Activated CD4-positive, alpha-beta T cell treated with anti-CD3 and anti-CD28 coated beads for 36 hours (primary cell): ENCODE measurements at regions of chr6 and their contacts with region 1.

Region 1: DNA sequence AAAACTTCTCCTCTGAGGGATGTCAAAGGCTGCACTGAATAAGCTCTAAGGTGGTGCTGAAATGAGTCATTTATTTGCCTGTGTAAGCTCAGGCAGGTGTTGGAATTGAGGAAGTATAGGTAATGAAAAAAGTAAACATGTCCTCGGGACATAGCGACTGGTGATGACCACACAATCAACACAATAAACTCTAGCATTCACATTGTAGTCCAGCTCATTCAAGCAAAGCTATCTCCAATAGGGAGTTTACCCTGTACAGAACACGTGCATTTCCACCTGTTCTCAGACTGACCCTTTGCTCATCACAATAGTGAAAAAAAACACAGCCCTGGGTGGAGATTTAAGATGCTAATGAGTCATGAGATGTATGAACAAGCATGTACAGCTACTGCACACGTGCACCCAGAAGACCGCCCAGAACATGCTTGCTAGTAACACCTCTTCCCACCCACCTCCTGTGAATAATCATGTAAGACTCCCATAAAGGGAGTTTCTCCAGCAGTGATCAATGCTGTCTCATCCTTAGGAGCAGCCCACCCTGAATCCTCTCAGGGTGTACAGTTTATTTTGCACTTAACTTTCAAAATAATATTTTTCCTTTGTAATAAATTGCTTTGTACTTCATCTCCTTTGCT is 33.0 kb upstream of the POU5F1 start:
- DNase-seq: peak; percentile 78
- ATAC-seq: peak; percentile 77
- H3K4me3 Mint-ChIP-seq: peak overlapping the region; percentile 74
- H3K27ac Mint-ChIP-seq: peak overlapping the region; percentile 94
- H3K4me1 Mint-ChIP-seq: peaks cover 63% of the 10 kb centered on the region
- H3K27me3 Mint-ChIP-seq: no peaks in the 10 kb centered on the region

Region 2: DNA sequence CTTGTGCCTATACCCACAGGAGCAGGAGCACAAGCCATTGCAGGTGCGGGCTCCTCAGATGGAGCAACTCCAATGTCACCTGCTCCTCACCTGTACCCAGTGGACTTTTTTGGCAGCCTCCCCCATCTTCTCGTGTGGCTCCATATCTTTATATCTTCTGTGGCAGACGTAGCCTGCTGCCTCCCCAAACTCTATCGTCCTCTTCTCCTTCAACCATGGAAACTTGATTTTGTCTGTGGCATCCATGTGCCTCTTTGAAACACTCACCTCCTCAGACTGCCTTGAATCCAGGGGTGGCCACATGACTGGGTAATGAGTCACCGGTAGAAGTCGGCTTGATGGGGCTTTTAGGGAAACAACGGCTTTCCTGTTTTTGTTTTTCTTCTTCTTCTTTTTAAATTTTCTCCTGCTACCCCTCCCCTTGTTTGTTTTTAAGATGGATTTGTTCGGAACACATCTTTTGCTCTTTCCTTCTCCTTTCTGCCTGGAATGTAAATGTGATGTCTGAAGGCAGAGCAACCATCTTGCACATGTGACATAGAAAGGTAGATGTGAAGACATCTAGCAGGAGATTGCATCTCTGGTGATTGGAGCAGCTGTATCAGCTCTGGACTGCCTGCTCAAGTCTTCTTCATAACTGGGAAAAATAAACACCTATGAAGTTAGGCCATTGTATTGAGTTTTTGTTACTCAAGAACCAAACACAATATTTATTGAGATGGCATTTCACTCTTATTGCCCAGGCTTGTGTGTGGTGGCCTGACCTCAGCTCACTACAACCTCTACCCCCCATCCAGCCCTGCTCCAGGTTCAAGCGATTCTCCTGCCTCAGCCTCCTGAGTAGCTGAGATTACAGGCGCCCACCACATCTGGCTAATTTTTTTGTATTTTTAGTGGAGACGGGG is 389.1 kb before region 1 on chr6:
- CTCF ChIA-PET with region 1: no interaction called
- POLR2A ChIA-PET with region 1: no interaction called
- intact Hi-C with region 1: loop called in 1 of 2 experiments (anchors 5 kb)
- DNase-seq: peak; percentile 79
- ATAC-seq: peak; percentile 40
- H3K4me3 Mint-ChIP-seq: peak overlapping the region; percentile 38
- H3K27ac Mint-ChIP-seq: peak overlapping the region; percentile 96
- H3K4me1 Mint-ChIP-seq: peaks cover 91% of the 10 kb centered on the region
- H3K27me3 Mint-ChIP-seq: no peaks in the 10 kb centered on the region

Region 3: DNA sequence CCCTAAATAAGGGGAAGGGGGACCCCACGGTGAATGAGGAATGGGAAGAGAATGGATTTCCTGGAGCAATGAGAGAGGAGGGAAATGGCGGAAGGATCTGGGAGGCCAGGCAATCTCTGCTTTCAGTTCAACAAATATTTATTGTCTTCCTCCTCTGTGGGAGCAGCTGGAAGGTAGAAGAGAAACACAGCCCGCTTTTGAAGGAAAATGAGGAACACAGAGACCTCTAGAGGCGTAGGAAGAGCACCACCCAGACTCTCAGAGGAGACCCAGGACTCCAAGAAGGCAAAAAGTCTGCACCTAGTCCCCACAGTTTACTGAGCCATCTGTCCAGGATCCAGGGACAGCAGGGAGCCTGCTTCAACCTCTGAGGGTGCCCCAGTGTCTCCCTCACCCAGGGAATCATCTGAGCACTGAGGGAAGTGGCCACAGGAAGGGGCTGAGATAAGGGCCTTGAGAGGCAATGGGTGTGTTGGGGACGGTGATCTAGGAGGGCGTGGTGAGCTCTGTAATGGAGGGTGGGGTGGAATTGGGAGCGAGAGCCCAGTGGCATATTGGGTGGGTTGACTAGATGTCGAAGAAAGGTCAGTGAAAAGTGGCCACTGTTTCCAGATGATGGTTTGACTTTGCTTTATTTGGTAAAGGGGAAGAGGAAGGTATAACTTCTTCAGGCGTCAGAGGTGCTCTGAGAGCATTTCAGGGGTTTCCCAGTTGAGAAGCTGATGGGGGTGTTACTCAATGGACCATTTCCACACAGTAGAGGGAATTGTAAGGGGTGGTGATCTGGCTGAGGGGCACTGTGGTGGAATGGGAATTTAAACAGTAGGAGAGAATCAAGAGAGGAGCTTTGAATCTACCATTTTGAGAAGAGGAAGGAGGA is 88.3 kb before region 1 on chr6:
- CTCF ChIA-PET with region 1: no interaction called
- POLR2A ChIA-PET with region 1: no interaction called
- intact Hi-C with region 1: no loop called
- DNase-seq: no peak
- ATAC-seq: no peak
- H3K4me3 Mint-ChIP-seq: no peak overlapping the region
- H3K27ac Mint-ChIP-seq: no peak overlapping the region
- H3K4me1 Mint-ChIP-seq: no peaks in the 10 kb centered on the region
- H3K27me3 Mint-ChIP-seq: peaks cover 2% of the 10 kb centered on the region

Region 4: GRCh38 chr6:31128093-31128676 is 75.3 kb before region 1 on chr6:
- CTCF ChIA-PET with region 1: no interaction called
- POLR2A ChIA-PET with region 1: no interaction called
- intact Hi-C with region 1: no loop called
- DNase-seq: peak; percentile 85
- ATAC-seq: peak; percentile 88
- H3K4me3 Mint-ChIP-seq: no peak overlapping the region
- H3K27ac Mint-ChIP-seq: no peak overlapping the region
- H3K4me1 Mint-ChIP-seq: peaks cover 2% of the 10 kb centered on the region
- H3K27me3 Mint-ChIP-seq: peaks cover 2% of the 10 kb centered on the region

Region 5: GRCh38 chr6:31332637-31333602 is 129.5 kb after region 1 on chr6:
- CTCF ChIA-PET with region 1: interaction called, 4 read pairs
- POLR2A ChIA-PET with region 1: no interaction called
- intact Hi-C with region 1: loop called in 1 of 2 experiments (anchors 1 kb)
- DNase-seq: peak; percentile 64
- ATAC-seq: peak; percentile 91
- H3K4me3 Mint-ChIP-seq: peak overlapping the region; percentile 48
- H3K27ac Mint-ChIP-seq: peak overlapping the region; percentile 73
- H3K4me1 Mint-ChIP-seq: peaks cover 19% of the 10 kb centered on the region
- H3K27me3 Mint-ChIP-seq: no peaks in the 10 kb centered on the region

Region 6: DNA sequence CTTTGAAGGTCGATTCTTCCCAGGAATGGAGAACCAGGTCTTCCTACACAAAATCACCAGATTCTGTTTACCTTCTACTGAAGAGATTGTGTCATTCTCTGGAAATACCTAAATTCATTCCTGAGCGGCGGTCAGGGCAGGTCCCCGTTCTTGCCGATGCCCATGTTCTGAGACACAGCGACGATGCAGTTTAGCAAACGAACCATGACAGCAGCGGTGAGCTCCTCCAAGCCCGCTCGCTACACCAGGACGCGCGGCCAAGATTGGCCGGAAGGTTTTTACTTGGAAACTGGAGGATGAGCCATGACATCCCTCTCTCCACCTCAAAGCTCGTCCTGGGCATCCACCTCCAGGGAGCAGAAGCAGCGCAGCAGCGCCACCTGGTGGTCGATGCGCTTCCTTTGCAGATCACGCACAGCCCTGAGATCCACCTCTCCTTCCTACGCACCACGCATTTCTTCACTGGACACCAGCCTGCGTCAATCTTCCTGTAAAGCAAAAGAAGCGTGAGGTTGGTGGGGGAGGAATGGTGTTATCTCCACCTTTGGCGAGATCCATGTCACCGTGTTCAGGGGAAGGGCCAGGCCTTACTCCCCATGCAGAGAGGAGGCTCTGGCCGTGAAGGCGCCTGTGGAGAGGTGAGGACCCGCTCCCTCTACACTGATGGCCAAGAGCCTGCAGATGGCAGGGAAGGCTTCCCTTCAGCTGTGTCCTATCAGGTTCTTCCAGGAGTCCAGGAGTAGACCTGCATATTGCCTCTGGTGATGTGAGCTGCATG is 163.4 kb after region 1 on chr6:
- CTCF ChIA-PET with region 1: interaction called, 13 read pairs
- POLR2A ChIA-PET with region 1: no interaction called
- intact Hi-C with region 1: no loop called
- DNase-seq: peak; percentile 88
- ATAC-seq: peak; percentile 96
- H3K4me3 Mint-ChIP-seq: peak overlapping the region; percentile 73
- H3K27ac Mint-ChIP-seq: peak overlapping the region; percentile 49
- H3K4me1 Mint-ChIP-seq: peaks cover 21% of the 10 kb centered on the region
- H3K27me3 Mint-ChIP-seq: peaks cover 22% of the 10 kb centered on the region